CD4-positive, alpha-beta T cell (primary cell): ENCODE measurements at regions of chr20 and their contacts with region 1.

Region 1: DNA sequence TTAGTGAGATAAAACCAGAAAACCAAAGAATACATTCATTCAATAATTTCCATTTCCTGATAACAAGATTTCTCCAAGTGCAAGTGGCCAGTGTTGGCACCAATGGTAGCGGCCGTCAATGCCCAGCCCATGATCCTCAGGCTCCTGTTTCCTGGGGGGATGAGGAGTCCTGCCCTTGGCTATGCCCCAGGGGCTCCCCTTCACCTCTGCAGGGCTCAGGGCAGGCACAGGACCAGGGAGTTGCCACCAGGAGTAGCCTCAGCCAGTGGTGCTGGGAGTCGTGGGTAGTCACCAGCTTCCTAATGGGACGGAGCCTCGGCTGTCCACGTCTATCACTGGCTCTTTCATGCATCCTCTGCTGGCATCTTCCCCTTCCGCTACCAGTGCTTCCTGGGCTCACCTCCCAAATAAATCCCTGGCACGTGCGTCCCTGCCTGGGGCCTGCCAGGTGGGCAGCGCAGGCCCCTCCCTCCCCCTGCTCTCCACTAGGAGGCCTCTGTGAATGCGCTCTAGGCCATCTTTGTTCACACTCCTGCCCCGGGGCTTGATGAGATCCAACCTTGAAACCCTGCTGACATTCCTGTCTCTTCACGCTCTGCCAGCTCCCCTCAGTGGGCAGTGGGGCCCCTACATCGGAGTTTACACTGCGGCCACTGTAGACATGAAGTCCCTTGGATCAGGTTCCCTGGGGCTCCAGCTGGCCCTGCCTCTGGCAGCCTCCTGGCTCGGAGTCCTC is 215.7 kb downstream of the SYNDIG1 start:
- DNase-seq: peak in 1 of 14 experiments; percentile 28
- ATAC-seq: no peak
- H3K4me3 ChIP-seq: no peak overlapping the region
- H3K4me3 Mint-ChIP-seq: no peak overlapping the region
- H3K27ac ChIP-seq: no peak overlapping the region
- H3K27ac Mint-ChIP-seq: no peak overlapping the region
- H3K4me1 ChIP-seq: no peaks in the 10 kb centered on the region
- H3K4me1 Mint-ChIP-seq: no peaks in the 10 kb centered on the region
- H3K27me3 ChIP-seq: no peaks in the 10 kb centered on the region
- H3K27me3 Mint-ChIP-seq: peaks cover 5% of the 10 kb centered on the region
- CTCF ChIP-seq: no peak

Region 2: DNA sequence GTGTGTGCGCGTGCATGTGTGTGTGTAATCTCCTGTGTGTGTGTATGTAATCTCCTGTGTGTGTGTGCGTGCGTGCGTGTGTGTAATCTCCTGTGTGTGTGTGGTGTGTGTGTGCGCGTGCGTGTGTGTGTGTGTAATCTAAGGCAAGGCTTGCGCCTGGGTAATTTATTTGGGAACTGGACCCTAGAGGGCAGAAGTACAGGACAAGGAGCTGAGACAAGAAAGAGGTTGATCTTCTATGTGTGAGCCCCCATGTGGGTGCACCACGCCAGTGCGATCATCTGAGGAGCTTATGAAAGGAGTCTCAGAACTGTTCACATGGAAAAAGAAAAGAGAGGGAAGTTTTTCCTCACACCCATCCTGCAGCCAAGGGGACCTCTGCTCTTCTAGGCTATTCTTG is 476.5 kb before region 1 on chr20:
- CTCF ChIA-PET with region 1: no interaction called
- POLR2A ChIA-PET with region 1: no interaction called
- intact Hi-C with region 1: no loop called
- DNase-seq: no peak
- ATAC-seq: no peak
- H3K4me3 ChIP-seq: no peak overlapping the region
- H3K4me3 Mint-ChIP-seq: no peak overlapping the region
- H3K27ac ChIP-seq: no peak overlapping the region
- H3K27ac Mint-ChIP-seq: no peak overlapping the region
- H3K4me1 ChIP-seq: no peaks in the 10 kb centered on the region
- H3K4me1 Mint-ChIP-seq: peaks cover 7% of the 10 kb centered on the region
- H3K27me3 ChIP-seq: peaks cover 22 to 23% of the 10 kb centered on the region in 2 experiments
- H3K27me3 Mint-ChIP-seq: peaks cover 25% of the 10 kb centered on the region
- CTCF ChIP-seq: no peak

Region 3: DNA sequence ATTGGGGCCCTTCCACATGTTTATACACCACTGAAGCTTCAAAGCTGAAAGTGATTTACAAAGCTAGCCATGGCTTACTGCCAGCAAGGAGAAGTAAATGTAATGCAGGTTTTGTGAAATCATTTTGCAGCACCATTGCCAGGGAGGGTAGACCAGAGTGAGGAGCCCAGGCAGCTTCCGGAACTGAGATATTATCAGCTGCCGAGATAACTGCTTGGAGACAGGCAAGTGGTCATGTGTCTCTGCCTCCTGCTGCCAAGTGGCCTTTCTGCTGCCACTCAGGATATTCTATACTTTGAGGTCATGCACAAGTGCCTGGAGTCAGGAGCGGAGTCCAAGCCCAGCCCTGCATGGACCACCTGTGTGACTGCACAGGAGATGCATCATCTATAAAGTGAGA is 55.5 kb before region 1 on chr20:
- CTCF ChIA-PET with region 1: no interaction called
- POLR2A ChIA-PET with region 1: no interaction called
- intact Hi-C with region 1: loop called in 1 of 2 experiments (anchors 10 kb)
- DNase-seq: no peak
- ATAC-seq: no peak
- H3K4me3 ChIP-seq: no peak overlapping the region
- H3K4me3 Mint-ChIP-seq: no peak overlapping the region
- H3K27ac ChIP-seq: no peak overlapping the region
- H3K27ac Mint-ChIP-seq: peak overlapping the region; percentile 52
- H3K4me1 ChIP-seq: no peaks in the 10 kb centered on the region
- H3K4me1 Mint-ChIP-seq: peaks cover 17% of the 10 kb centered on the region
- H3K27me3 ChIP-seq: no peaks in the 10 kb centered on the region
- H3K27me3 Mint-ChIP-seq: no peaks in the 10 kb centered on the region
- CTCF ChIP-seq: no peak